ENCODE measurements at regions of chr2 and their contacts with region 1.

Region 1: DNA sequence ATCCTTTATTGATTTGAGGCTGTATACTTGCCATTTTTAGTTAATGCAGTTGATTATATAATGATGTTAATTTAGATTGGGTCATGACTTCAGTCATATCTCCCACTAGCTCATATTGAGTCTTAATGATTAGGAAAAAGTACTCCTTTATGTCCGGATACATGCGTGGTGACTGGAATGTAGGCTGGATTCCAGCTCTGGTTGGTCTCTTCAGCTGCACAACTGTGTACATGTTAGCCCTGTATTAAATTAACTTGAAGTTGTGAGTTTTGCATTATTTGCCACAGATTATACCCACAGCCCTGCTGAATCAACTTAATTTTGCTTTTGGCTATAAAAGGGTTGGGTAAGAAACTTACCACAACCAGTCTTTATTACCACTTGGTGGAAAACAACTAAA is 22.5 kb downstream of the MOB4 start:
- DNase-seq: no peak
- ATAC-seq: no peak
- H3K4me3 Mint-ChIP-seq: no peak overlapping the region
- H3K27ac Mint-ChIP-seq: no peak overlapping the region
- H3K4me1 Mint-ChIP-seq: peaks cover 14% of the 10 kb centered on the region
- H3K27me3 Mint-ChIP-seq: no peaks in the 10 kb centered on the region
- CTCF ChIP-seq: no peak

Region 2: GRCh38 chr2:197416268-197416667 is 122.1 kb before region 1 on chr2:
- CTCF ChIA-PET with region 1: no interaction called
- POLR2A ChIA-PET with region 1: no interaction called
- intact Hi-C with region 1: no loop called
- DNase-seq: no peak
- ATAC-seq: no peak
- H3K4me3 Mint-ChIP-seq: no peak overlapping the region
- H3K27ac Mint-ChIP-seq: no peak overlapping the region
- H3K4me1 Mint-ChIP-seq: no peaks in the 10 kb centered on the region
- H3K27me3 Mint-ChIP-seq: no peaks in the 10 kb centered on the region
- CTCF ChIP-seq: no peak

Region 3: GRCh38 chr2:197515739-197516392 is 22.5 kb before region 1 on chr2 and contains the start of gene MOB4:
- CTCF ChIA-PET with region 1: no interaction called
- POLR2A ChIA-PET with region 1: no interaction called
- intact Hi-C with region 1: loop called (anchors 2 kb)
- DNase-seq: peak; percentile 96
- ATAC-seq: peak; percentile 95
- H3K4me3 Mint-ChIP-seq: peak within 1 kb of the TSS; percentile 96
- H3K27ac Mint-ChIP-seq: peak within 1 kb of the TSS; percentile 95
- H3K4me1 Mint-ChIP-seq: peaks cover 33% of the 10 kb centered on the region
- H3K27me3 Mint-ChIP-seq: no peaks in the 10 kb centered on the region
- CTCF ChIP-seq: no peak
- total RNA-seq, gene MOB4: 21.7 and 22.1 TPM in 2 replicates

Region 4: GRCh38 chr2:199278099-199278498 is 1739.7 kb after region 1 on chr2:
- CTCF ChIA-PET with region 1: no interaction called
- POLR2A ChIA-PET with region 1: no interaction called
- intact Hi-C with region 1: no loop called
- DNase-seq: no peak
- ATAC-seq: no peak
- H3K4me3 Mint-ChIP-seq: no peak overlapping the region
- H3K27ac Mint-ChIP-seq: no peak overlapping the region
- H3K4me1 Mint-ChIP-seq: no peaks in the 10 kb centered on the region
- H3K27me3 Mint-ChIP-seq: no peaks in the 10 kb centered on the region
- CTCF ChIP-seq: no peak